ENCODE measurements at regions of chr7 and their contacts with region 1.

Region 1: DNA sequence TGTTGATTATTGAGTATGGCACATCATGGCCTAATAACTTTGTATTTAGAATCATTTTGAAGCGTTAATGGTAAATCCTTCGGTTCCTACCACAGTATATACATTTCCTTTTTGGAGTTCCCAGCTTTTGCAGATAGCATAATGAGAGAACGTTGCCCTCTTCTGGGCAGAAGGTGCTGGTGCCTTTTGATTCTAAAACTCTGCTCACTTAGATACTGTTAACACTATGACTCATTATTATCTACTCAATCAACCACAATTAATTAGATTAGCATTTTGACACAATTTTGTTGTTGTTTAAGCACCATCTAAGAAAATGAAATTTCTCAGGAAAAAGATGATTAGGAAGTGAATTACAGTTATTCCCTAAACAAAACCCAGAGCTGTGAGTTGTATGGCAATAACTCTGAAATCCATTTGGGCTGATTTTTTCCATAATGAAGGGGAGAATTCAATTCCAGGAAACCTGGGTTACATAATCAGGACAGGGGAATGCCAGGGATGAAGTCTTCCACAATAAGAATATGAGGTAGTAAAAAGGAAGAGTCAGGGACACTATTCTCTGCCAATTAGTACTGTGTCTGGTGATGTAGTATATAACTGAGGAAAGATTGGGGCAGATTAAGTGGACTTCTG is 11.5 kb upstream of the DLD start:
- DNase-seq: peak in 4 of 7 donors; percentile 32 to 70 (median 42)
- H3K4me3 ChIP-seq: no peak overlapping the region
- H3K27ac ChIP-seq: no peak overlapping the region
- H3K4me1 ChIP-seq: no peaks in the 10 kb centered on the region
- H3K27me3 ChIP-seq: no peaks in the 10 kb centered on the region
- CTCF ChIP-seq: peak; percentile 50 to 85 (median 67)
- POLR2A ChIP-seq: no peak

Region 2: GRCh38 chr7:107213193-107213788 is 666.2 kb before region 1 on chr7:
- intact Hi-C with region 1: loop called in 1 of 2 experiments (anchors 10 kb)
- DNase-seq: no peak
- H3K4me3 ChIP-seq: no peak overlapping the region
- H3K27ac ChIP-seq: no peak overlapping the region
- H3K4me1 ChIP-seq: no peaks in the 10 kb centered on the region
- H3K27me3 ChIP-seq: no peaks in the 10 kb centered on the region
- CTCF ChIP-seq: no peak
- POLR2A ChIP-seq: no peak

Region 3: GRCh38 chr7:107462740-107463444 is 416.6 kb before region 1 on chr7:
- intact Hi-C with region 1: loop called (anchors 5 to 10 kb)
- DNase-seq: peak; percentile 51 to 85 (median 66)
- H3K4me3 ChIP-seq: no peak overlapping the region
- H3K27ac ChIP-seq: no peak overlapping the region
- H3K4me1 ChIP-seq: no peaks in the 10 kb centered on the region
- H3K27me3 ChIP-seq: no peaks in the 10 kb centered on the region
- CTCF ChIP-seq: peak; percentile 50 to 88 (median 82)
- POLR2A ChIP-seq: no peak

Region 4: DNA sequence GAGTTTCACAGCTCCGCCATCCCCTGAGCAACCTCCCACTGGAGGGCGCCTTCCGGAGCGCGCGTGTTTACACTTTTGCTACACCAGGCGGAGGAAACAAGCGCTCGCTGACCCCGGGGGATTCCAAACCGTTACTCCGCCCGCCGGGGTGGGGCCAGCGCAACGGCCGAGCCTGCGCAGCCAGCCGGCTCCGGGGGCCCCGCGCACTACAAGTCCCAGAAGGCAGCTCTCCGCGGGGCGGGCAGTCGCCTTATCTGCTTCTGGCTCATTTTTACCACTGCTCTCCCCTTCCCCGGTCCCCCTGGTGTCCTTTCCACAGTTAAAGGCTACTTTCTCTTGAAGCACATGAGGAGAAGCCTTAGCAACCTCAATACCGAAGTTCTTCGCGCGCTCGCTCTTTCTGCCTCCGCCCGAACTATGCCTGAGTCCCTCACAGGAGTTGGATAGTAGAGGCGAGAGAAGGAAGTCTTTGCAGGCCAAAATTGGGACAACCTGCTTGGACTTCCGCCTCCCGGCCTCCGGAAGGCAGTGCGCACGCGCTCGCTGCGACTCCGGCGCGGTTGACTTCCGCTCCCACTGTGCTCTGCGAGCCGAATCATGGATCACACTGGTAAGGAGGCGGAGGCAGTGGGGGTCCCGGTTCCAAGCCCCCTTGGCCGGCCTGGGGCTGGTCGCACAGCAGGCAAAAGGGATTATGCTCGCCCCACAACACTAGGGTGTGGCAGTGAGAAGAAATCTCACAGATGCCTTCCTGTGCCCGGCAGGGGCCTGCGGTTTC is 135.8 kb before region 1 on chr7 and contains the start of gene CBLL1:
- intact Hi-C with region 1: loop called (anchors 5 to 10 kb)
- DNase-seq: peak; percentile 96 to 98 (median 97)
- H3K4me3 ChIP-seq: peak within 1 kb of the TSS; percentile 26 to 83 (median 69)
- H3K27ac ChIP-seq: peak within 1 kb of the TSS; percentile 60 to 96 (median 95)
- H3K4me1 ChIP-seq: peaks cover 12 to 39% of the 10 kb centered on the region in 2 donors
- H3K27me3 ChIP-seq: no peaks in the 10 kb centered on the region
- CTCF ChIP-seq: peak; percentile 45 to 78 (median 66)
- POLR2A ChIP-seq: peak in 1 of 2 donors; percentile 77
- total RNA-seq, gene CBLL1: 16.4 to 34.1 (median 19.8) TPM

Region 5: DNA sequence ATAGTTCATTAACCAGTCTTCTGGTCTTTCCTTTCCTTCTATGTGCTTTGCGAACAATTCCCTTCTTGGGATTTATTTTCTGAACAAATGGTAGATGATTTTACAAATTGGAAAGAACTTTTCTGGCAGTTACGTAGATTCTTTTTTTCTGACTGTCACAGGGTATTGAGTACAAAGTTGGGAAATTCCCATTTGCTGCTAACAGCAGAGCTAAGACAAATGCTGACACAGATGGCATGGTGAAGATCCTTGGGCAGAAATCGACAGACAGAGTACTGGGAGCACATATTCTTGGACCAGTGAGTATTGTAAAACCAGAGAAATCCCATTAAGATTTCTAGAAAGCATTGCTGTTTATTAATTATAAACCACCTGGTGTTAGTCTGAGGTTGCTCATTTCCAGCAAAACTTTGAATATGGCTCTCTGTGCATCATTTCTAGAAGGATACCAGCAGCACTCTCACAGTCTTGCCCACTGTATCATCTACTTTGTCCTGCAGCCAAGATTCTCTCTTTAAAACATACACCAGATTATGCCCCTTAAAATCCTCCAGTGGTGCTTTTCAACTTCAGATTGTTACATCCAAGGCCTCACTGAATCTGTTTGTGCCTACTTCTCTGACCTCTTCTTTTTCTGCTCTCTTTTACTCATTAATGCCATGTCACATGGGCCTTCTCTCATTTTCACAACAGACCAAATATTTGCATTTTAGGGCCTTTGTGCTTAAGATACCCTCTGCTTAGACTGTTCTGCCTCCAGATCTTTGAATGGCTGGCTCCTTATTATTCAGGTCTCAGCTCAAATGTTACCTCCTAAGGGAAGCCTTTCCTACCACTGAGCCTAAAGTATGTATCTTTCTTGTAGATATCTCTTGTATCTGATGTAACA is 38.5 kb after region 1 on chr7:
- intact Hi-C with region 1: no loop called
- DNase-seq: no peak
- H3K4me3 ChIP-seq: no peak overlapping the region
- H3K27ac ChIP-seq: no peak overlapping the region
- H3K4me1 ChIP-seq: peaks cover 0 to 20% of the 10 kb centered on the region in 2 donors
- H3K27me3 ChIP-seq: no peaks in the 10 kb centered on the region
- CTCF ChIP-seq: no peak
- POLR2A ChIP-seq: no peak